MCF 10A (cell line): ENCODE measurements at regions of chr3 and their contacts with region 1.

Region 1: GRCh38 chr3:111681661-111682426 is 86.7 kb upstream of the ZBED2 start:
- DNase-seq: no peak
- H3K4me3 Mint-ChIP-seq: no peak overlapping the region
- H3K27ac Mint-ChIP-seq: no peak overlapping the region
- H3K4me1 Mint-ChIP-seq: peaks cover 16% of the 10 kb centered on the region
- H3K27me3 Mint-ChIP-seq: no peaks in the 10 kb centered on the region
- CTCF ChIP-seq: no peak

Region 2: DNA sequence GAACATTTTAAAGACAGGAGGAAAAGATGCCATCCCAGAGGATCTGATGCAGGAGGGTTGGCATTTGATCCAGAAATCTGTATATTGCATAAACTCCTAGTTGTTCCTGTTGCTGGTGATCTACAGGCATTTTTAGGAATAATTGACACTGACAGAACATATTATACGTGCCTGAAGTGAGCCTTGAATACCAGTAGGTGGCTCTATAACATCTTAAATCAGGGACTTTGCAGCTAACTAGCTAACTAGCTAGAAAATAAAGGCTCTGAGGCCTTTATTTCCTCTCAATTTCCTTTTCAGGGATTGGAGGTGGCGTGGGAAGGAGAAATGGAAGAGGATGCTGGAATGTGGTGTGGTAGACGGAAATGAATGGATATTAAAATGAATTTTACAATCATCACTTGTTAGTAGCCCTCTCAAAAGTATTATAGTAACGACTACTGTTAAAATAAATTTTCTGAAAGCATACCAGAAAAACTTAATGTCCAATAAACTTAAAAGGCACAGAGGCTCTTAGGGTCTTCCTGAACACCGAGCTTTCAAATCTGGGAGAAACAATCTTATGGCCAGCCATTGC is 12.8 kb before region 1 on chr3:
- CTCF ChIA-PET with region 1: interaction called, 12 read pairs
- POLR2A ChIA-PET with region 1: interaction called, 4 read pairs
- intact Hi-C with region 1: no loop called
- DNase-seq: peak; percentile 61
- H3K4me3 Mint-ChIP-seq: no peak overlapping the region
- H3K27ac Mint-ChIP-seq: peak overlapping the region; percentile 10
- H3K4me1 Mint-ChIP-seq: peaks cover 33% of the 10 kb centered on the region
- H3K27me3 Mint-ChIP-seq: no peaks in the 10 kb centered on the region
- CTCF ChIP-seq: peak; percentile 71